Natural killer cell (primary cell): ENCODE measurements at regions of chr12 and their contacts with region 1.

Region 1: GRCh38 chr12:121802846-121803630 is 771 bp upstream of the SETD1B start:
- DNase-seq: peak; percentile 85 to 94
- ATAC-seq: peak; percentile 52 to 69 (median 59)
- H3K4me3 ChIP-seq: peak overlapping the region; percentile 57
- H3K4me3 Mint-ChIP-seq: peak overlapping the region; percentile 100
- H3K27ac ChIP-seq: peak overlapping the region; percentile 97
- H3K27ac Mint-ChIP-seq: peak overlapping the region; percentile 100
- H3K4me1 ChIP-seq: peaks cover 60% of the 10 kb centered on the region
- H3K4me1 Mint-ChIP-seq: peaks cover 44 to 59% of the 10 kb centered on the region in 2 donors
- H3K27me3 ChIP-seq: no peaks in the 10 kb centered on the region
- H3K27me3 Mint-ChIP-seq: no peaks in the 10 kb centered on the region
- CTCF ChIP-seq: no peak

Region 2: DNA sequence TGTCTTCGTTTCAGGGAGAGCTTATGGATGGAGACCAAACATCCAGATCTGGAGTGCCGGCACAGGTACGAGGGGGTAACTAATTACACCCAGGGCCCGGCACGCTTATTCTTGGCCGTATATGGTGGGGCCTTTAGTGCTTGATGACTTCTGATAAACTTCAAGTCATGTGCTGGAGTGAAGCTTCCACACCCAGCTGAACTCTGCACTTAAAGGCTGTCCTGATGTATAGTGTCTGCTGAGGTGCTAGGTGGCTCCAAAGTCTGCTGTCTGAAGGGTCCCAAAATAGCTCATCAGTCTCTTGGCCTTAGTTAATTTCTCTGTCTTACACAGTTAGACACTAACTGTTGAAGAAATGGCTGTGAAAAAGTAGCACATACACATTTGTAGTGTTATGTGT is 385.2 kb before region 1 on chr12:
- intact Hi-C with region 1: no loop called
- DNase-seq: no peak
- ATAC-seq: no peak
- H3K4me3 ChIP-seq: no peak overlapping the region
- H3K4me3 Mint-ChIP-seq: no peak overlapping the region
- H3K27ac ChIP-seq: no peak overlapping the region
- H3K27ac Mint-ChIP-seq: peak overlapping the region in 1 of 2 donors; percentile 45
- H3K4me1 ChIP-seq: no peaks in the 10 kb centered on the region
- H3K4me1 Mint-ChIP-seq: peaks cover 4 to 7% of the 10 kb centered on the region in 2 donors
- H3K27me3 ChIP-seq: no peaks in the 10 kb centered on the region
- H3K27me3 Mint-ChIP-seq: no peaks in the 10 kb centered on the region
- CTCF ChIP-seq: no peak

Region 3: GRCh38 chr12:122500685-122501488 is 697.8 kb after region 1 on chr12 and contains the start of gene ZCCHC8:
- intact Hi-C with region 1: loop called (anchors 5 kb)
- DNase-seq: peak; percentile 92 to 98
- ATAC-seq: peak; percentile 93 to 99 (median 94)
- H3K4me3 ChIP-seq: peak within 1 kb of the TSS; percentile 83
- H3K4me3 Mint-ChIP-seq: peak within 1 kb of the TSS; percentile 98
- H3K27ac ChIP-seq: peak within 1 kb of the TSS; percentile 96
- H3K27ac Mint-ChIP-seq: peak within 1 kb of the TSS; percentile 95 to 97
- H3K4me1 ChIP-seq: peaks cover 26% of the 10 kb centered on the region
- H3K4me1 Mint-ChIP-seq: peaks cover 19 to 30% of the 10 kb centered on the region in 2 donors
- H3K27me3 ChIP-seq: no peaks in the 10 kb centered on the region
- H3K27me3 Mint-ChIP-seq: no peaks in the 10 kb centered on the region
- CTCF ChIP-seq: no peak
- total RNA-seq, gene ZCCHC8: 57.7 to 71.6 (median 66.6) TPM